Vagina (tissue), 2 donors: ENCODE measurements at regions of chr13 and their contacts with region 1.

Region 1: DNA sequence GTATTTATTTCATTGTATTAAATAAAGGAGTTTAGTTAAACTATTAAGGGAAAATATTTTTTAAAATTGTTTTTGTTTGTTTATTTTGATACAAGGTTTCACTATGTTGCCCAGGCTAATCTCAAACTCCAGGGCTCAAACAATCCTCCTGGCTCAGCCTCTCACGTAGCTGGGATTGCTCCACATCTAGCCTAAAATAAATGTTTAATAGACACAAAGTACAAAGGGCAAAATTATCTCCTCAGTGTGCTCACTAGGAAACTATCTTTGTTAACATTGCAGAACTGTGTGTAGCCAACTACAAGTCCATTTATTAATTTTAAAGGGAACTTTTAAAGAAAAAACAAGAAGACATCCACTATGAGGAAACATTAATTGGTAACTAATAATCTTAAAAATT is 207.2 kb upstream of the PCDH17 start:
- DNase-seq: no peak
- H3K4me3 ChIP-seq: no peak overlapping the region
- H3K27ac ChIP-seq: no peak overlapping the region
- H3K4me1 ChIP-seq: no peaks in the 10 kb centered on the region
- H3K27me3 ChIP-seq: no peaks in the 10 kb centered on the region
- CTCF ChIP-seq: no peak
- POLR2A ChIP-seq: no peak

Region 2: DNA sequence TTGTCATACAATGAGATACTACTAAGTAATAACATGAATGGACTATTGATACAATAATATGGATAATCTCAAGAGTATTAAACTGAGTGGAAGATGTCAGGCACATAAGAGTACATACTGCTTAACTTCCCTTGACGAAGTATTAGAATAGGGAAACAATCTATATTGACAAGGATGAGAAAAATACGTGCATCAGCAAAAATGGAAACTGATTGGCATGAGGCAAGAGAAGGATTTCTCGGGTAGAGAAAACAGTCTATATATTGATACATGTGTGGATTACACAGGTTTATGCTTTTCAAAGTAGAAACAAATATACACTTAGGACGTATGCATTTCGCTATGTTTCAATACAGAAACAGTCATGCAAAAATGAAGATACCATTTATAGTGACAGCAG is 200.0 kb before region 1 on chr13:
- intact Hi-C with region 1: no loop called
- DNase-seq: no peak
- H3K4me3 ChIP-seq: no peak overlapping the region
- H3K27ac ChIP-seq: no peak overlapping the region
- H3K4me1 ChIP-seq: no peaks in the 10 kb centered on the region
- H3K27me3 ChIP-seq: no peaks in the 10 kb centered on the region
- CTCF ChIP-seq: no peak
- POLR2A ChIP-seq: no peak

Region 3: DNA sequence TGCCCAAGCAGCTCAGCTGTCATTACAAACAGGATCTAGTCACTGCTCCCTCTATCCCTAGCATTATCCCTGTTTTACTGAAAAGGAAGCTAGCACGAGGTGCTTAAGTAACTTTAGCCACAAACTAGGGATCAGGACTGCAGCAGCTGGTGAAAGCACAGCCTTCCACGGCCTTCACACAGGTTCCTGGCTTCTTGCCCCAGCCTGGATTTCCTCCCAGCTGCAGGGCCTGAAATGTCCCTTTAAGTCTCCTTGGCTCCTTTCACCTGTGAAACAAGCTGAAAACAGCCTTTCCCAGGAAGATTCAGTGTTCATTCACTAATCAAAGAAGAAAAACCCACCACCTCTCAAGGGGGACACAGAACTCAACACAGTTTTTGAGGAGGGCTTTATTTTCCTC is 1984.8 kb after region 1 on chr13:
- intact Hi-C with region 1: loop called (anchors 10 kb)
- DNase-seq: no peak
- H3K4me3 ChIP-seq: no peak overlapping the region
- H3K27ac ChIP-seq: no peak overlapping the region
- H3K4me1 ChIP-seq: no peaks in the 10 kb centered on the region
- H3K27me3 ChIP-seq: no peaks in the 10 kb centered on the region
- CTCF ChIP-seq: no peak
- POLR2A ChIP-seq: no peak